HCT116 (cell line): ENCODE measurements at regions of chr6 and their contacts with region 1.

Region 1: GRCh38 chr6:55543633-55544309 is 35.2 kb downstream of the HMGCLL1 start:
- DNase-seq: no peak
- ATAC-seq: peak; percentile 82
- H3K4me3 ChIP-seq: no peak overlapping the region
- H3K27ac ChIP-seq: no peak overlapping the region
- H3K4me1 ChIP-seq: no peaks in the 10 kb centered on the region
- H3K27me3 ChIP-seq: peaks cover 38% of the 10 kb centered on the region
- CTCF ChIP-seq: peak in 2 of 3 experiments; percentile 32 to 35; a peak in 2 of 6 replicates
- POLR2A ChIP-seq: no peak
- RAD21 ChIP-seq: no peak

Region 2: GRCh38 chr6:55047451-55048044 is 496.2 kb before region 1 on chr6:
- CTCF ChIA-PET with region 1: no interaction called
- POLR2A ChIA-PET with region 1: no interaction called
- RAD21 ChIA-PET with region 1: no interaction called
- intact Hi-C with region 1: no loop called
- DNase-seq: no peak
- ATAC-seq: no peak
- H3K4me3 ChIP-seq: no peak overlapping the region
- H3K27ac ChIP-seq: no peak overlapping the region
- H3K4me1 ChIP-seq: peaks cover 0 to 12% of the 10 kb centered on the region in 2 experiments; a peak in 2 of 4 replicates
- H3K27me3 ChIP-seq: no peaks in the 10 kb centered on the region
- CTCF ChIP-seq: no peak
- POLR2A ChIP-seq: no peak
- RAD21 ChIP-seq: no peak

Region 3: GRCh38 chr6:55518529-55519060 is 25.2 kb before region 1 on chr6:
- CTCF ChIA-PET with region 1: no interaction called
- POLR2A ChIA-PET with region 1: no interaction called
- RAD21 ChIA-PET with region 1: no interaction called
- intact Hi-C with region 1: no loop called
- DNase-seq: no peak
- ATAC-seq: no peak
- H3K4me3 ChIP-seq: no peak overlapping the region
- H3K27ac ChIP-seq: no peak overlapping the region
- H3K4me1 ChIP-seq: no peaks in the 10 kb centered on the region
- H3K27me3 ChIP-seq: peaks cover 10% of the 10 kb centered on the region; the same call in 1 of the 2 replicates
- CTCF ChIP-seq: no peak
- POLR2A ChIP-seq: no peak
- RAD21 ChIP-seq: no peak

Region 4: DNA sequence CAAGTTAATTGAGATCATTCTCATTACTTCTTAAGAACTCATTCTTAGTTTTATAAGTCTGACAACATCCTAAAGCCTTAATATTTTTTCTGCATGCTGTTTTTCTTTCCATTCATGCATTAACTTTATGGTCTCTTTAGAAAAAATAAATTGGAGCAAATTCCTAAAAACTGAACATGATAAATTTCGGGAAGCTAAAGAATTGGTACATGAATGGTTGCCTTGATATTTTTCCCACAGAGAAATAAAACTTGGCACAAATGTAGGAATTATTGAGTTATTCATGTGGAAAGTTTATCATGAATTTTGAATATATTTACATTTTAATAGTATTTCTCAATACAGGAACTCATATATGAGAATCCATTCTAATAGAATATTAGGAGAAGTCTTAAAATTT is 215.8 kb after region 1 on chr6:
- CTCF ChIA-PET with region 1: no interaction called
- POLR2A ChIA-PET with region 1: no interaction called
- RAD21 ChIA-PET with region 1: interaction called in 1 of 2 experiments, 11 read pairs
- intact Hi-C with region 1: no loop called
- DNase-seq: no peak
- ATAC-seq: no peak
- H3K4me3 ChIP-seq: no peak overlapping the region
- H3K27ac ChIP-seq: no peak overlapping the region
- H3K4me1 ChIP-seq: no peaks in the 10 kb centered on the region
- H3K27me3 ChIP-seq: peaks cover 21% of the 10 kb centered on the region
- CTCF ChIP-seq: no peak
- POLR2A ChIP-seq: no peak
- RAD21 ChIP-seq: no peak

Region 5: DNA sequence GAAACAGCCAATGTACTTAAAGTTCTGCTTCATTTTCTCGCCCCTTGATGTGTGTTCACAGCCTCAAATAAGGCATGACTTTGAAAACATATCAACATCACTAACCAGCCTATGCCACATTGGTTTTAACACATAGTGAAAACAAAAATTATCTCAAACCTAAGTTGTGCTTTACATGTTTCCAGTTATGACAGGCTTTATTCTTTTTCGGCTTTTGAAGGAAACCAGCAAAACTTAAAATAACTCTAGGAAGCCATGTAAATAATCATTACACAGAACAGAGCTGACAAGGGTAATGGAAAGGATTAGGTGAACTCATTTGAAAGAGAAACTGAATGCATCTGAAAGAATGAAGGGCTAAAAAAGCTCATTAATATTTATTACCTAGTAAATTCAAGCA is 289.5 kb after region 1 on chr6:
- CTCF ChIA-PET with region 1: no interaction called
- POLR2A ChIA-PET with region 1: no interaction called
- RAD21 ChIA-PET with region 1: no interaction called
- intact Hi-C with region 1: no loop called
- DNase-seq: no peak
- ATAC-seq: no peak
- H3K4me3 ChIP-seq: no peak overlapping the region
- H3K27ac ChIP-seq: no peak overlapping the region
- H3K4me1 ChIP-seq: no peaks in the 10 kb centered on the region
- H3K27me3 ChIP-seq: peaks cover 51% of the 10 kb centered on the region
- CTCF ChIP-seq: no peak
- POLR2A ChIP-seq: no peak
- RAD21 ChIP-seq: no peak